ENCODE measurements at regions of chr1 and their contacts with region 1.

Region 1: DNA sequence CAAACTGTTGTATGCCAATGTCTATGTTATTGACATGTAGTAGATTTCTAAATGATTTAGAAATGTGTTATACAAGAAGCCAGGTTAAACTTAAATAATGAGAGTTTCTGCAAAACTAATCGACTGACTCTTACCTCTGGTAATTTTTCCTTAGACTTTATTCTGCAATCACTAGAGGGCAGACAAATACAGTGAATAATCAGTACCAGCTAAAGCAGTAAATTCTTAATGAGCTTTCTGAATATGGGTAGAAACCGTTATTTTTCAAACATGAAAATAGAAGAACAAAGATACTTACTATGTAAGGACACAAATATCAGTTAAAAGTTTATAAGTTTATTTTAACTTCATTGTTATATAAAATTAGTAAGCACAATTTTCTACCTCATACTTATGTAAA is 97.9 kb upstream of the RGS1 start:
- DNase-seq: no peak
- ATAC-seq: no peak
- H3K4me3 ChIP-seq: no peak overlapping the region
- H3K27ac ChIP-seq: no peak overlapping the region
- H3K4me1 ChIP-seq: no peaks in the 10 kb centered on the region
- H3K27me3 ChIP-seq: no peaks in the 10 kb centered on the region
- CTCF ChIP-seq: peak; percentile 24

Region 2: GRCh38 chr1:192439373-192440025 is 38.1 kb before region 1 on chr1:
- intact Hi-C with region 1: no loop called
- DNase-seq: no peak
- ATAC-seq: no peak
- H3K4me3 ChIP-seq: no peak overlapping the region
- H3K27ac ChIP-seq: no peak overlapping the region
- H3K4me1 ChIP-seq: no peaks in the 10 kb centered on the region
- H3K27me3 ChIP-seq: no peaks in the 10 kb centered on the region
- CTCF ChIP-seq: no peak

Region 3: DNA sequence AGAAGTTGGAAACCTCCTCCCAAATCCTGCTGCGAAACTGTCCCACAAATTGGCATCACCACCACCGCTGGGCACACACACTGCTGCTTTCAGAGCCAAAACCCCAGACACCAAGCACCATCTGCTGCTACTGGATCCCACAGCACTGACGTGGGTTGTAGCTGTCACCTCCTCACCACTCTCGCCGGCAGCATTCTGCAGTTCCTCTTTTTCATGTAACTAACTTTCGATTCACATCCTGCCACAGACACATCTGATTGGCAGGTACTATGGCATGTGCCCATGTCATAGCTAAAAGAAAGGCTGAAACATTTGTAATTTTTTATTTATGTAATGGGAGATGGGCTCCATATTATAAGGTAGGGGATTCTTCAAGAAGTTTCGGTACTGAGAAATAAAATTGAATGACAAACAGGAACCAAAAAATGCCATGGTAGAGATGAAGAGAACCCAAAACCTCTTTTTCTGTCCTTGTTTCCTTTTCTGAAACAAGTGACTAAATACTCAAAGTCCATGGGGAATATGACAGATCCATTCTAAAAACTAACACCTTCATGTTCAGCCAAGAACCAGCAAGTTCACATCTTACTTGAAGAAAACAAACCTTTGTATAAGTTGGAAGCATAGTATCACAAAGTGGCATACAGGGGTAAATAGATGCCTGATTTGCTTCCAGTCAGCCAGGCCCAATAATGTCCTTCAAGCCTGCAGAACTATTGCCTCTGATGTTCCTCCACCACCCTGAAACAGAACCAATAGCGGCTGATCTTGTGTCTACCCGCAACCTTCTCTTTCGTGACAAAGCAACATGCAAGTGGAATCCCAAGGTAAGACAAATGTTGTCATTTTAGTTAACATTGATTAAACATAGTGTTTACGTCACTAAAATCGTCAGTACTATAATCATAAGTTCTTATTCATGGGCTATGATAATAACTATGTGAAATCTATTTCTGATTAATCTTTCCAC is 131.8 kb after region 1 on chr1:
- intact Hi-C with region 1: loop called (anchors 2 to 10 kb)
- DNase-seq: peak; percentile 23 to 65
- ATAC-seq: peak in 3 of 4 donors; percentile 40 to 57 (median 53)
- H3K4me3 ChIP-seq: no peak overlapping the region
- H3K27ac ChIP-seq: no peak overlapping the region
- H3K4me1 ChIP-seq: no peaks in the 10 kb centered on the region
- H3K27me3 ChIP-seq: no peaks in the 10 kb centered on the region
- CTCF ChIP-seq: no peak

Region 4: DNA sequence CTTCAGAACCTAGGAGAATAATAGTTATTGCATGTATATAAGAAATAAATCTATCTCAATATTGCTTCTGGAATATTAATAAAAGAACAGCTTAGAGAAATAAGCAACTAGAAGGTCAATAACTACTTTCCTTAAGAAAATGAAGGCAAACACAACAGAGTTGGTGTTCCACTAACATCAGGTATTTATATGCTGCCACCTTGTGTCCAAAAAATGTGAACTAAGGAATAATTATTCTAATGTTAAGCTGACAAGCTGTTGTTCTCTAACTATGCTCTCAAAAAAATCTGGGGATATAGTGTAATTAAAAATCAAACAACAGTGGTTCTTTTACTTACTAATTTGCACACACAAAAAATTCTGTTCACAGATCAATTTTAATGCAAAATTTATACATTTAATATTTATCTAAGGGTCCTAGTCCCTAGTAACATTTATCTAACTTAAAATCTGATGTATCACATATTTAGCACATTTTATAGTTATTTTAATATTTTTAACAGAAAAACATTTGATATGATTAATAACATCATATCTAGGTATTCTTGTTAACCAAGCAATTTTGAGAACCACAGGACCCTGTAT is 541.9 kb after region 1 on chr1:
- intact Hi-C with region 1: loop called (anchors 5 kb)
- DNase-seq: no peak
- ATAC-seq: peak in 1 of 4 donors; percentile 57
- H3K4me3 ChIP-seq: no peak overlapping the region
- H3K27ac ChIP-seq: no peak overlapping the region
- H3K4me1 ChIP-seq: no peaks in the 10 kb centered on the region
- H3K27me3 ChIP-seq: no peaks in the 10 kb centered on the region
- CTCF ChIP-seq: peak; percentile 56